Psoas muscle (tissue), 8 donors: ENCODE measurements at regions of chr10 and their contacts with region 1.

Region 1: GRCh38 chr10:85995791-85996190 is 370.8 kb downstream of the GRID1 start:
- DNase-seq: no peak
- ATAC-seq: peak in 3 of 4 donors; percentile 51 to 57 (median 53)
- H3K4me3 ChIP-seq: no peak overlapping the region
- H3K27ac ChIP-seq: no peak overlapping the region
- H3K4me1 ChIP-seq: no peaks in the 10 kb centered on the region
- H3K27me3 ChIP-seq: no peaks in the 10 kb centered on the region
- CTCF ChIP-seq: peak; percentile 56

Region 2: DNA sequence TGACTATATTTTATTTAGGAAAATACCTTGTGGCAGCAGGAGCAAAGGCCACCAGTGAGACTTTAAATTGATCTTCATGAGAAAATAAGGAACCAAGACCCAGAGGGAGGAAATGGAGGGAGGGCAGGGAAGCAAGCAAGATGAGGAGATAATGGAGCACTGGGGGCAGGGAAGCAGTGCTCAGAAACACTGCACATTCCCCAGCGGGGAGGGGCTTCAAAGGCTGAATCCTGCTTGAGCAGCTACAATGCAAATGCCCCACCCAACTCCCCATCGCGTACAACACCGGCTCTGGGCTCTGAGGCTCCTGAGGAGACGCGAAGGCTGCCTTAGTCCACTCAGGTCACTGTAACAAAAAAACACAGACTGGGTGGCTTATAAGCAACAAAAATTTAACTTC is 133.0 kb before region 1 on chr10:
- intact Hi-C with region 1: no loop called
- DNase-seq: no peak
- ATAC-seq: no peak
- H3K4me3 ChIP-seq: no peak overlapping the region
- H3K27ac ChIP-seq: no peak overlapping the region
- H3K4me1 ChIP-seq: peaks cover 9% of the 10 kb centered on the region
- H3K27me3 ChIP-seq: no peaks in the 10 kb centered on the region
- CTCF ChIP-seq: no peak

Region 3: DNA sequence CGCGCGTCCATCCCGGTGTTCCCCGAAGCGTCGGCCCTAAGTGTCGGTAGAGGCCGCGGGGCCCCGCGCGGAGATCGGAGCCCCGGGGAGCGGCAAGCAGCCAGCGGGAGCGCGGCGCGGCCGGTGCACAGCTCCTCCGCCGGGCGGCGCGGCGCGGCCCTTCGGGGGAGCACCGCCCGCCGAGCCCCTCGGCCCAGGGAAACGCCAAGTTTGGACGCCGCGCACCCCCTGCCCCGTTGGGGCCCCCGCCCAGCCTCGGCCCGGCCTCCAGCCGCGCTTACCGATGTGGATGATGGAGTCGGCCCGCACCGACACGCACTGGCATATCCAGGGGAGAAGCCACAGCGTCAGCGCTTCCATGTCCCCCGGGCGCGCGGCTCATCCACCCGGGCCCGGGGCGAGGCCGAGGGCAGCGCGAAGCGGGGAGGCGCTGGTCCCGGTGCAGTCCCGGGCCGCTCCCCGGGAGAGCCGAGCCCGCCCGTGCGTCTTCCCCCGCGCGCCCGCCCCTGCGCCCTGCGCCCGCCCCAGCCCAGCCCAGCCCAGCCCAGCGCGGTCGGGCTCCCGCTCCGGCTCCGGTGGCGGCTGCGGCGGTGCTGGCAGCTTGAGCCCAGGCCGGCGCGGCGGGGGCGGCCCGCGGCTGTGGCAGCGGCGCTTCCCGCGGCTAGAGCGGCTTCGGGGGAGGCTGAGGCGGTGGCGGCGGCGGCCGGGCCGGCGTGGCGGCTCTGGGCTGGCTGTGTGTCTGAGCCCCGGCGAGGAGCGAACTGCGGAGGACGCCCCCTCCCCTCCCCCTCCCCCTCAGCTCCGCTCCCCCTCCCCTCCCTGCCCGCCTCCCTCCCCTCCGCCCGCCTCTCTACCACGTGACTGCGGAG is 370.5 kb after region 1 on chr10 and contains the start of gene GRID1:
- intact Hi-C with region 1: loop called in 1 of 2 experiments (anchors 10 kb)
- DNase-seq: peak; percentile 41 to 55
- ATAC-seq: peak in 3 of 4 donors; percentile 42 to 62 (median 60)
- H3K4me3 ChIP-seq: peak within 1 kb of the TSS; percentile 66
- H3K27ac ChIP-seq: no peak within 1 kb of the TSS
- H3K4me1 ChIP-seq: peaks cover 16% of the 10 kb centered on the region
- H3K27me3 ChIP-seq: peaks cover 0 to 76% (median 22%) of the 10 kb centered on the region in 3 donors
- CTCF ChIP-seq: no peak
- total RNA-seq, gene GRID1: 0.20 to 0.56 (median 0.31) TPM